T-cell (primary cell): ENCODE measurements at regions of chr14 and their contacts with region 1.

Region 1: DNA sequence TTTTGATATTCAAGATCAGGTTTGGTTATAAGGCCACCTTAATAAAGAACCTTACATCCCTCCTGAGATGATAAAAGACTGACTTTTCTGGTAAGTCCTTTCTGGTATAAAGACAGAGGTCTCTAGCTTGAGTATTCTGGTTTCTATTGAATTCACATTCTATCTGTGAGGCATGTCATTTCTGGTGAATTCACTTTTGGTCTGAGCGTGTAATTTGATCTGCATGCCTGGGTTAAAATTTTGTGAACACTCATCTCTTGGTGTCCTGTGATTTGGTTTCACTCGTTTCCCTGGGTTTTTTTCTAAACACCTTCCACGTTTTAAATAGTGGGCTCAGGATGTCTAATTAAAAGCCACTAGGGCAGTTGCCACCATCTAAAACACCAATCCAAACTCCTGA is 12.2 kb downstream of the EIF5 start:
- DNase-seq: no peak
- ATAC-seq: no peak
- H3K4me3 ChIP-seq: no peak overlapping the region
- H3K4me3 Mint-ChIP-seq: no peak overlapping the region
- H3K27ac ChIP-seq: no peak overlapping the region
- H3K27ac Mint-ChIP-seq: no peak overlapping the region
- H3K4me1 ChIP-seq: no peaks in the 10 kb centered on the region
- H3K4me1 Mint-ChIP-seq: peaks cover 8 to 17% (median 9%) of the 10 kb centered on the region in 3 donors
- H3K27me3 ChIP-seq: no peaks in the 10 kb centered on the region
- H3K27me3 Mint-ChIP-seq: peaks cover 0 to under 1% of the 10 kb centered on the region in 2 donors

Region 2: GRCh38 chr14:103334644-103335622 is 11.4 kb before region 1 on chr14:
- CTCF ChIA-PET with region 1: no interaction called
- POLR2A ChIA-PET with region 1: interaction called, 8 to 23 read pairs
- DNase-seq: peak; percentile 17 to 74 (median 48)
- ATAC-seq: peak; percentile 29 to 46 (median 40)
- H3K4me3 ChIP-seq: peak overlapping the region; percentile 68 to 99
- H3K4me3 Mint-ChIP-seq: peak overlapping the region; percentile 90 to 93 (median 91)
- H3K27ac ChIP-seq: peak overlapping the region; percentile 99
- H3K27ac Mint-ChIP-seq: peak overlapping the region; percentile 84 to 90
- H3K4me1 ChIP-seq: peaks cover 7 to 32% of the 10 kb centered on the region in 2 experiments
- H3K4me1 Mint-ChIP-seq: peaks cover 48 to 56% (median 48%) of the 10 kb centered on the region in 3 donors
- H3K27me3 ChIP-seq: no peaks in the 10 kb centered on the region
- H3K27me3 Mint-ChIP-seq: no peaks in the 10 kb centered on the region

Region 3: GRCh38 chr14:103436533-103436932 is 90.2 kb after region 1 on chr14:
- CTCF ChIA-PET with region 1: no interaction called
- POLR2A ChIA-PET with region 1: no interaction called
- DNase-seq: no peak
- ATAC-seq: no peak
- H3K4me3 ChIP-seq: no peak overlapping the region
- H3K4me3 Mint-ChIP-seq: no peak overlapping the region
- H3K27ac ChIP-seq: no peak overlapping the region
- H3K27ac Mint-ChIP-seq: peak overlapping the region; percentile 28 to 39
- H3K4me1 ChIP-seq: peaks cover 0 to 2% of the 10 kb centered on the region in 2 experiments
- H3K4me1 Mint-ChIP-seq: peaks cover 19 to 32% (median 24%) of the 10 kb centered on the region in 3 donors
- H3K27me3 ChIP-seq: no peaks in the 10 kb centered on the region
- H3K27me3 Mint-ChIP-seq: no peaks in the 10 kb centered on the region